Endothelial cell of umbilical vein (primary cell): ENCODE measurements at regions of chr7 and their contacts with region 1.

Region 1: DNA sequence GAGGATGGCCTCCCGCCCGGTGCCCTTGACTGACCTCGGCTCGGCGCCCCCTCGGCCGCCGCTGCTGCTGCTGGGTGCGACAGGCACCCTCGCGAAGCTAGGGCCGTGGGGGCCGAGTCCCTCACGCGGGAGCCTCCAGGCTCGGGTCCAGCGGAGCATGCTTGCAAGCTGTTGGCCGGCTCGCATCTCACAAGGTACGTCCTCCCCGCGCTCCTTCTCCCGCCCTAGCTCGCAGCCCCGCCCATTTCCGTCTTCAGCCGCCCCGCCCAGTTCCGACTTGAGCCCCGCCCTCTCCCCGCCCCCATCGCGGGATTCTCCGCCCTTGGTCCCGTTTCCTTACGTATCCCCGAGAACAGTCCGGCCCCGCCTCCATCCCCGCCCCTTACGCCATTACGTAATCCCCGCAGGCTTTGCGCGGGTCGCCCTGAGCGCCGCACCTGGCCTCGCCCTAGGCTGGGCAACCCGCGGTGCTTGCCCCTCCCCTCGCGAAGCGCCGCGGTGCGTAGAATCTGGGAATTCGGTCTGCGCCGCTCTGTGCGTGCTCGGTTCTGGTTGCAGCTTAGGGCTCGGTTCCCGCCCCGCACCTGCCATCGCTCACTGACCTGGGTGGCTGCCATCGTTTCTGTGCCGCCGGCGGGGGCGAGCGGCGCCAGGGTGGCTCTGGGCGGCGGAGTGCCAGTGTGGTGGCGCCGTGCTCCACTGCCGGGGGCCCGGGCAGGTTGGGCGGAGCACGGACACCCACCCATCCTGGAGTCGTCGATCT is at the start of gene ABHD11:
- DNase-seq: peak; percentile 96
- H3K4me3 ChIP-seq: peak within 1 kb of the TSS; percentile 52 to 84 (median 79)
- H3K27ac ChIP-seq: peak within 1 kb of the TSS; percentile 41
- H3K4me1 ChIP-seq: peaks cover 8% of the 10 kb centered on the region
- H3K27me3 ChIP-seq: no peaks in the 10 kb centered on the region
- CTCF ChIP-seq: no peak
- POLR2A ChIP-seq: peak; percentile 89
- total RNA-seq, gene ABHD11: 13.3 and 19.0 TPM in 2 replicates

Region 2: GRCh38 chr7:73423519-73424488 is 315.0 kb before region 1 on chr7:
- CTCF ChIA-PET with region 1: no interaction called
- POLR2A ChIA-PET with region 1: no interaction called
- dilution Hi-C with region 1: no loop called
- intact Hi-C with region 1: no loop called
- DNase-seq: peak; percentile 40
- H3K4me3 ChIP-seq: no peak overlapping the region
- H3K27ac ChIP-seq: no peak overlapping the region
- H3K4me1 ChIP-seq: no peaks in the 10 kb centered on the region
- H3K27me3 ChIP-seq: no peaks in the 10 kb centered on the region
- CTCF ChIP-seq: no peak
- POLR2A ChIP-seq: no peak

Region 3: GRCh38 chr7:73451780-73452398 is 286.9 kb before region 1 on chr7:
- CTCF ChIA-PET with region 1: interaction called, 4 read pairs
- POLR2A ChIA-PET with region 1: no interaction called
- dilution Hi-C with region 1: no loop called
- intact Hi-C with region 1: loop called (anchors 5 kb)
- DNase-seq: peak; percentile 68
- H3K4me3 ChIP-seq: no peak overlapping the region
- H3K27ac ChIP-seq: no peak overlapping the region
- H3K4me1 ChIP-seq: no peaks in the 10 kb centered on the region
- H3K27me3 ChIP-seq: no peaks in the 10 kb centered on the region
- CTCF ChIP-seq: peak; percentile 85 to 88
- POLR2A ChIP-seq: no peak

Region 4: DNA sequence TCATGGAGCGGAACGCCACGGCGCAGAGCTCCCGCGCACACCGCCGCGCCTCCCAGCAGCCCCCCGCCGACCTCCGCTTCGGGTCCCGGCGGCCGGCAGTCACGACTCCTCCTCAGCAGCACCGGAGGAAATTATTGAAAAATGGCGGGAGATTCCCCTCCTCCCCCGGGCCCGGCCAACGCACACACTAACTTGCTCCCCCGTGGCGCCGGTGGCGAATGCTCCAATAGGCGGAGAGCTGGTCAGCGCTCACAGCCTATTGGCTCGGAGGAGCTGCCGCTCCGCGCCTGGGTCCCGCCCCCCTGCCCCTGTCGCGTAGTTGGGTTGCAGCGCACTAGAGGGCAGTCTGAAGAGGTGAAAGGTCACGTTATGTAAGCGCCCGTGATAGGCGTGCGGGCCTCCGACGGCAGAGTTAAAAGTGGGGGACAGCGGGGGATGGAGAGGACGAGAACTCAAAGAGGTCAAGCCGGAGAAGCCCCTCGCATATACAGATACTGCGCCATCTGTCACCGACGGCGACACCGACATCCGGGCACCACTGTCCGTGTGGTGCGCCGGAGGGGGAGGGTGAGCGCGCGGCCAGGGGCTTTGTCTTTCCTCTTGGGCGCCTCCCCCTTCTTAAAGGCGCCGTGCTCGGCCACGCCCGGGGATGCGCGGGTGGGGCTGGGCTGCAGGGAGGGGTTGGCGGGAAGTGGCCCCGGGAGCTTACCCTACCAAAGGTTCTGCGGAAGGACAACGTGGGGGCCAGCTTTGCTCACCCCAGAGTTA is 216.5 kb before region 1 on chr7 and contains the start of gene BAZ1B:
- CTCF ChIA-PET with region 1: interaction called, 6 read pairs
- POLR2A ChIA-PET with region 1: interaction called, 4 read pairs
- dilution Hi-C with region 1: no loop called
- intact Hi-C with region 1: loop called (anchors 2 kb)
- DNase-seq: peak; percentile 98
- H3K4me3 ChIP-seq: peak within 1 kb of the TSS; percentile 83 to 91 (median 89)
- H3K27ac ChIP-seq: peak within 1 kb of the TSS; percentile 65
- H3K4me1 ChIP-seq: peaks cover 27% of the 10 kb centered on the region
- H3K27me3 ChIP-seq: no peaks in the 10 kb centered on the region
- CTCF ChIP-seq: no peak
- POLR2A ChIP-seq: no peak
- total RNA-seq, gene BAZ1B: 72.6 and 74.7 TPM in 2 replicates

Region 5: DNA sequence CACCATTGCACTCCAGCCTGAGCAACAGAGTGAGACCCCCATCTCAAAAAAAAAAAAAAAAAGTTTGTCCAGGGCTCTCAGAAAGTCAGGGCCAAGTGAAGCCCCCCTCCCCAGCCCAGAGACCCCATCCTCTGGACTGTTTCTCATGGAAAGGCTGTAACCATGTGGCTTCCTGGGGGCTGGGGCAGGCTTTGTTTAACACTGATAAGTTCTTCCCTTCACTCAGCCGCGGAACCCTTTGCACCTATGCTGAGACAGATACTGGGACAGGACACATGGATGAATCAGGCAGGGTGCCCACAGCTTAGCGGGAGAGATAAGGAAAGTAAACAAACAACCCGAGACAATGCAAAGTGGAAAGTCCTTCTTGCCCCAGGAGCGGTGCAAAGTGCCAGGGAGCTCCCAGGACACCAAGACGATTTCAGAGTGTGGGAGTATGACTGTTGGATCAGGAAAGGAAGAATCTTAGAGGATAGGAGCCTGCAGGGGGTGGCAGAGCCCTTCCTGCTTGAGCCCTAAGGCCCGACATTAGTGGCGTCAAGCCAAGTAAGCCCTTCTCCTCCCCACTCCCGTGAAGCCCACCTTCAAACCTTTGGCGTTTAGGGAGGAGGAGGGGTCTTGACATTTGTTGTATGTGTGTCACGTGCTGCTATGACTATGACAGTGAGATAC is 126.1 kb before region 1 on chr7:
- CTCF ChIA-PET with region 1: interaction called, 106 read pairs
- POLR2A ChIA-PET with region 1: no interaction called
- dilution Hi-C with region 1: no loop called
- intact Hi-C with region 1: loop called (anchors 2 kb)
- DNase-seq: peak; percentile 47
- H3K4me3 ChIP-seq: no peak overlapping the region
- H3K27ac ChIP-seq: no peak overlapping the region
- H3K4me1 ChIP-seq: peaks cover 4% of the 10 kb centered on the region
- H3K27me3 ChIP-seq: peaks cover 0 to 4% of the 10 kb centered on the region in 2 experiments
- CTCF ChIP-seq: no peak
- POLR2A ChIP-seq: no peak

Region 6: DNA sequence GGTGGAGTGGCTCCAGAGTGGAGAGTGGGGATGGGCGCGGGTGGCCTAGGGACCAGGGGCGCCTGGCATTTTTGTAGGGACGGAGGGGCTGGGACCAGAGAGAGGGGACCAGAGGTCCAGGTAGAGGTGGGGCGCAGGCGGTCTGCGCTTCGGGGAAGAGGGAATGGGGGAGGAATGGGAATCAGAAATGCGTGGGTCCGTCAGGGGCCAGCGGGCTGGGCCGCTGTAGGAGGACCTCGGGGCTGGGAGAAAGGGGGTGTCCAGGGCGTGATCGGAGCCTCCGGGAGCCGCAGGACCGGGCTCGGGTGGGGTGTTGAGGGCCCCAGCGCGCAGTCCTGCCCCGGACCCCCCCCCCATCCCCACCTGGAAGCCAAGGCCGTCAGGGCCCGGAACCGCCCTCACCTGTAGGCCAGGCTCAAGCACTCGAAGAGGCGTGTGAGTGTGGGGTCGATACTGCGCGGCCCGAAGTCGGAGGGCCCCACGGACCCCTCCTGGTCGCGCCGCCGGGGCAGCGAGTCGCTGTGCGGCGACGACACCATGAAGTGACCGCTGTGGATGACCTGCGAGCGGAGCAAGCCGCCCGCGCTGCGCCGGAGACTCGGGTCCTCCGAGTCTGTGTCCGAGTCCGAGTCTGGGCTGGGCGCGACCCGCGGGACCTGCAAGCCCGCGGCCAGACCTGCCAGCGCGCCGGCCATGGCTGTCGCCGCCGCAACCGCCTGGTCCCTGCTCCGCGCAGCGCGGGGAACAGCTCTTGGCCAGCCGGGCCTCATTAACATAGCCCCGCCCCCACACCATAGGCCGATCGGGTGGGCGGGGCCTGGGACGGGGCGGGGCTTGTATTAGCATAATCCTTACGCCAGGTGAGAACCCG is 114.8 kb before region 1 on chr7 and contains the start of gene MLXIPL:
- CTCF ChIA-PET with region 1: interaction called, 14 read pairs
- POLR2A ChIA-PET with region 1: no interaction called
- dilution Hi-C with region 1: no loop called
- intact Hi-C with region 1: no loop called
- DNase-seq: peak; percentile 51
- H3K4me3 ChIP-seq: peak within 1 kb of the TSS in 2 of 3 experiments; percentile 25 to 39
- H3K27ac ChIP-seq: no peak within 1 kb of the TSS
- H3K4me1 ChIP-seq: peaks cover 3% of the 10 kb centered on the region
- H3K27me3 ChIP-seq: peaks cover 28 to 39% of the 10 kb centered on the region in 2 experiments
- CTCF ChIP-seq: no peak
- POLR2A ChIP-seq: no peak
- total RNA-seq, gene MLXIPL: not detected in 2 replicates

Region 7: GRCh38 chr7:73726083-73726466 is 12.7 kb before region 1 on chr7:
- CTCF ChIA-PET with region 1: interaction called, 25 read pairs
- POLR2A ChIA-PET with region 1: no interaction called
- dilution Hi-C with region 1: no loop called
- intact Hi-C with region 1: no loop called
- DNase-seq: no peak
- H3K4me3 ChIP-seq: no peak overlapping the region
- H3K27ac ChIP-seq: no peak overlapping the region
- H3K4me1 ChIP-seq: peaks cover 5% of the 10 kb centered on the region
- H3K27me3 ChIP-seq: no peaks in the 10 kb centered on the region
- CTCF ChIP-seq: no peak
- POLR2A ChIP-seq: no peak

Region 8: DNA sequence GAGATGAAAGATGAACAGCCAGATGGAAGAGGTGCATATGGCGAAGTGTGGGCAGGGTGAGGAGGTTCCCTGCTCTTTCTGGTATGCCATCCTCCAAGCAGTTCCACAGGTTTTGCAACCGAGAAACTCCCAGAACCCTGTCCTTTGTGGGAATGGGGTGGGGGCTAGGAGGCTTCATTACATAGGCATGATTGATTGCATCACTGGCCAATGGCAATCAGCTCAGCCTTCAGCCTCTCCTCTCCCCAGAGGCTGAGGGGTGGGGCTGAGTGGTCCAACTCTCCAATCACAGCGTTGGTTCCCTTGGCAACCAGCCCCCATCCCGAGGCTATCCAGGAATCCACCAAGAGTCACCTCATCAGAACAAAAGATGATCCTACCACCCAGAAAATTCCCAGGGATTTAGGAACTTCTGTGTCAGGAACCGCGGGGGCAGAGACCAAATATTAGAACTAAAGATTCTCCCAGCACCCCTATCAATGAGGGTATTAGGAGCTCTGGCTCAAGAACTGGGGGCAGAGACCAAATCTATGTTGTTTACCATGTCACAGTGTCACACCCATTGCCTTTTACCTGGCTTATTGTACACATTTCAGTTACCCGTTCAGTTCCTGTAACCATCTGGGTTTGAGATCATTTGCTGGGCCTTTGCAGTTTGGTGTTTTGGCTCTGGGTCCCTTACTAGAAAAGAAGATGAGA is 54.0 kb after region 1 on chr7:
- CTCF ChIA-PET with region 1: no interaction called
- POLR2A ChIA-PET with region 1: no interaction called
- dilution Hi-C with region 1: no loop called
- intact Hi-C with region 1: no loop called
- DNase-seq: no peak
- H3K4me3 ChIP-seq: no peak overlapping the region
- H3K27ac ChIP-seq: no peak overlapping the region
- H3K4me1 ChIP-seq: no peaks in the 10 kb centered on the region
- H3K27me3 ChIP-seq: peaks cover 0 to 2% of the 10 kb centered on the region in 2 experiments
- CTCF ChIP-seq: no peak
- POLR2A ChIP-seq: no peak

Region 9: GRCh38 chr7:73851410-73852234 is 112.8 kb after region 1 on chr7:
- CTCF ChIA-PET with region 1: interaction called, 14 read pairs
- POLR2A ChIA-PET with region 1: no interaction called
- dilution Hi-C with region 1: no loop called
- intact Hi-C with region 1: loop called (anchors 1 kb)
- DNase-seq: peak; percentile 97
- H3K4me3 ChIP-seq: no peak overlapping the region
- H3K27ac ChIP-seq: peak overlapping the region; percentile 93
- H3K4me1 ChIP-seq: peaks cover 16% of the 10 kb centered on the region
- H3K27me3 ChIP-seq: no peaks in the 10 kb centered on the region
- CTCF ChIP-seq: no peak
- POLR2A ChIP-seq: peak; percentile 39

Region 10: GRCh38 chr7:73879977-73880681 is 141.3 kb after region 1 on chr7:
- CTCF ChIA-PET with region 1: no interaction called
- POLR2A ChIA-PET with region 1: no interaction called
- dilution Hi-C with region 1: no loop called
- intact Hi-C with region 1: no loop called
- DNase-seq: no peak
- H3K4me3 ChIP-seq: no peak overlapping the region
- H3K27ac ChIP-seq: no peak overlapping the region
- H3K4me1 ChIP-seq: peaks cover 9% of the 10 kb centered on the region
- H3K27me3 ChIP-seq: peaks cover 8 to 31% of the 10 kb centered on the region in 2 experiments
- CTCF ChIP-seq: no peak
- POLR2A ChIP-seq: no peak